Activated B cell treated with CpG ODN at 0.5 μM for 24 hours (primary cell): ENCODE measurements at regions of chr1 and their contacts with region 1.

Region 1: DNA sequence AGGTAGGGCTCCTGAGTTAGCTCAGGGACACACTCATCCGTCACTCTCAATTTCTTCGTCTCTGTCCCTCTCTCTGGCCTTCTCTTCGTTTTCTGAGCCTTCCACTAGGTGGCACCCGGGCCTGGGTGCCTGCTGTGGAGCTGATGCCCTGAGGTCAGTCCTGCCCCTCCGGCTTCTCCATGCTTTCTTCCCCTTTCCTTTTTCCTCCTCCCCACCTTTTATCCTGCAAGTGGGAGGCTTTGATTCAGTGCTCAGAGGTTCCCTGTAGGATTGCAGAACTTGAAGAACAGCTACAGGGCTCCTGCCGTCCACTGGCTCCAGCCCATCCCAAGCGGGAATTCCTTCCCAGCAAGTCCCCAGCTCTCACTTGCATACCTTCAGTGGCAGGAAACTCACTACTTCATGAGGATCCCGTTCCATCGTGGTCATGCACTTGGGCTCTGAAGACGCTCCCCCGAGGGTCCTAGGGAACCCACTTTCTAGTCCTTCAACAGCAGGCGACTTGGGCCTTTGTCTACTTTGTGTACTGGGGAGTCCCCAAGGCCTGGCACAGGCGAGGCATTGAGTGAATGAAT is 45.6 kb downstream of the SRRM1 start:
- DNase-seq: peak; percentile 46
- ATAC-seq: peak; percentile 93
- H3K4me3 Mint-ChIP-seq: no peak overlapping the region
- H3K27ac Mint-ChIP-seq: peak overlapping the region; percentile 8
- H3K4me1 Mint-ChIP-seq: peaks cover 7% of the 10 kb centered on the region
- H3K27me3 Mint-ChIP-seq: no peaks in the 10 kb centered on the region
- CTCF ChIP-seq: peak; percentile 40

Region 2: DNA sequence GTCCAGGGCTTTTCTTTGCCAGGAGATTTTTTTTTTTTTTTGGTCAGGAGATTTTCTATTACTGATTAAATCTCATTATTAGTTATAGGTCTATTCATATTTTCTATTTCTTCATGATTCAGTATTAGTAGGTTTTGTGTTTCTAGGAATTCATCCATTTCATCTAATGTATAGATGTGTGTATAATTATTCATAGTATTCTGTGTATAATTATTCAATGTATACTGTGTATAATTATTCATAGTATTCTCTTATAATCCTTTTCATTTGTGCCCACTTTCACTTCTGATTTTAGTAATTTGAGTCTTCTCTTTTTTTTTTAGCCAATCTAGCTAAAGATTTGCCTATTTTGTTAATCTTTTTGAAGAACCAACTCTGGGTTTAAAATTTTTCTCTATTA is 741.3 kb before region 1 on chr1:
- CTCF ChIA-PET with region 1: no interaction called
- POLR2A ChIA-PET with region 1: no interaction called
- intact Hi-C with region 1: no loop called
- DNase-seq: no peak
- ATAC-seq: no peak
- H3K4me3 Mint-ChIP-seq: no peak overlapping the region
- H3K27ac Mint-ChIP-seq: no peak overlapping the region
- H3K4me1 Mint-ChIP-seq: peaks cover 20% of the 10 kb centered on the region
- H3K27me3 Mint-ChIP-seq: no peaks in the 10 kb centered on the region
- CTCF ChIP-seq: no peak

Region 3: DNA sequence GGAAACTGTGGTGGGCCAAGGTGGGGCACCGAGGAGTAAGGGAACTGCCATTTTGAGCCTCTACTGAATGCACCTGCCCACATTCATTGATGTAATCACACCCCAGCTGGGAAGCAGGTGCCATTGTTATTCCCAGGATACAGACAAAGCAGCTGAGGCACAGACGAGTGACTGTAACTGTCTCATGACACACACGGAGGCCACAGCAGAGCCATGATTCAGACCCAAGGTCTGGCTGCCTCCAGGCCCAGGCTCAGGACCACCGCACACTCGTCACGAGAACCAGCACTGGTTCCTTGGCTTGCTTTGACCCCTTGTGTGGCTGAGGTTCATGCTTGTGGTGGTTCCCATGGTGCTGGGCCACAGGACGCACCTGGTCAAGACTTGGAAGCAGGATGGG is 10.9 kb after region 1 on chr1:
- CTCF ChIA-PET with region 1: interaction called, 15 read pairs
- POLR2A ChIA-PET with region 1: interaction called, 4 read pairs
- intact Hi-C with region 1: no loop called
- DNase-seq: no peak
- ATAC-seq: no peak
- H3K4me3 Mint-ChIP-seq: no peak overlapping the region
- H3K27ac Mint-ChIP-seq: no peak overlapping the region
- H3K4me1 Mint-ChIP-seq: peaks cover 25% of the 10 kb centered on the region
- H3K27me3 Mint-ChIP-seq: no peaks in the 10 kb centered on the region
- CTCF ChIP-seq: no peak

Region 4: DNA sequence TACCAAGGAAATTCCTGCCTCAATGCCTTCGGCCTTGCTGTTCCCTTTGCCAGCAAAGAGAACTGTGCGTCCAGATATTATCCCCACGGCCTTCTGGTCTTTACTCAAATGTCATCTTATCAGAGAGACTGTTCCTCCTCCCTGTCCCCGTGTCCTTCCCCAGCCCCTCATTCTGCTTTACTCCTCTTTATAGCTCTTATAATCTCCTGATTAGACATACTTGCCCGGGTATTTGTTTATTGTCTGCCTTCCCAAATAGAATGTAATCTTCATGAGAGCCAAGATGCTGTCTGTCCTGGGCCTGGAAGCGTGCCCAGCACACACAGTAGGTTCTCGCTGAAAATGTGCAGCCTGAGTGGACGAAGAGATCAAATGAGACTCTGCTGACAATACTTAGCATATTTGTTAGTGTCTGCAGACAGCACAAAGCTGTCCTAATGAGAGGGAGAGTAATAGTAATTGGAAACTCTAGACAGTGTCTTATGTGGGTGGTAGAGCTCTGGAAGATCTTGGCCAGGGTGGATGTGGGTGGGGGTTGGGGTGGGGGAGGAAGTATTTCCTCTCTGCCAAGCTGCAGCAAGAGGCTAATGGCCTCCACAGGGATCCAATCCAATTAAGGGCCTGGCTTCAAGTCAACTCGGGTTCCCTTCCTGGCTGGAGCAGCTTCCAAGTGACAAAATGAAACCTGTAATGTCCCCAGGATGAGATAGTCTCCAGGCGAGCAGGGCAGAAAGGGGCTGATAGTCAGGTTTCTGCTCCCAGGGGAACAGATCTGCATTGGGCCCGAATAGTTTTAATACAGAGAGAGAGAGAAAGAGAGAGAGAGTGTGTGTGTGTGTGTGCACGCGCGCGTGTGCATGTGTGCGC is 47.0 kb after region 1 on chr1:
- CTCF ChIA-PET with region 1: interaction called, 22 read pairs
- POLR2A ChIA-PET with region 1: interaction called, 7 read pairs
- intact Hi-C with region 1: no loop called
- DNase-seq: no peak
- ATAC-seq: no peak
- H3K4me3 Mint-ChIP-seq: peak overlapping the region; percentile 6
- H3K27ac Mint-ChIP-seq: peak overlapping the region; percentile 71
- H3K4me1 Mint-ChIP-seq: peaks cover 59% of the 10 kb centered on the region
- H3K27me3 Mint-ChIP-seq: no peaks in the 10 kb centered on the region
- CTCF ChIP-seq: no peak

Region 5: GRCh38 chr1:24822887-24823286 is 134.2 kb after region 1 on chr1:
- CTCF ChIA-PET with region 1: interaction called, 278 read pairs
- POLR2A ChIA-PET with region 1: interaction called, 5 read pairs
- intact Hi-C with region 1: no loop called
- DNase-seq: no peak
- ATAC-seq: no peak
- H3K4me3 Mint-ChIP-seq: no peak overlapping the region
- H3K27ac Mint-ChIP-seq: no peak overlapping the region
- H3K4me1 Mint-ChIP-seq: peaks cover 69% of the 10 kb centered on the region
- H3K27me3 Mint-ChIP-seq: no peaks in the 10 kb centered on the region
- CTCF ChIP-seq: no peak

Region 6: GRCh38 chr1:24830680-24831272 is 142.1 kb after region 1 on chr1:
- CTCF ChIA-PET with region 1: interaction called, 278 read pairs
- POLR2A ChIA-PET with region 1: interaction called, 8 read pairs
- intact Hi-C with region 1: loop called (anchors 2 kb)
- DNase-seq: no peak
- ATAC-seq: peak; percentile 74
- H3K4me3 Mint-ChIP-seq: no peak overlapping the region
- H3K27ac Mint-ChIP-seq: no peak overlapping the region
- H3K4me1 Mint-ChIP-seq: peaks cover 46% of the 10 kb centered on the region
- H3K27me3 Mint-ChIP-seq: no peaks in the 10 kb centered on the region
- CTCF ChIP-seq: peak; percentile 51

Region 7: GRCh38 chr1:24841593-24841992 is 152.9 kb after region 1 on chr1:
- CTCF ChIA-PET with region 1: interaction called, 148 read pairs
- POLR2A ChIA-PET with region 1: no interaction called
- intact Hi-C with region 1: no loop called
- DNase-seq: no peak
- ATAC-seq: no peak
- H3K4me3 Mint-ChIP-seq: no peak overlapping the region
- H3K27ac Mint-ChIP-seq: no peak overlapping the region
- H3K4me1 Mint-ChIP-seq: peaks cover 2% of the 10 kb centered on the region
- H3K27me3 Mint-ChIP-seq: no peaks in the 10 kb centered on the region
- CTCF ChIP-seq: no peak